ENCODE measurements at regions of chr1 and their contacts with region 1.

Region 1: DNA sequence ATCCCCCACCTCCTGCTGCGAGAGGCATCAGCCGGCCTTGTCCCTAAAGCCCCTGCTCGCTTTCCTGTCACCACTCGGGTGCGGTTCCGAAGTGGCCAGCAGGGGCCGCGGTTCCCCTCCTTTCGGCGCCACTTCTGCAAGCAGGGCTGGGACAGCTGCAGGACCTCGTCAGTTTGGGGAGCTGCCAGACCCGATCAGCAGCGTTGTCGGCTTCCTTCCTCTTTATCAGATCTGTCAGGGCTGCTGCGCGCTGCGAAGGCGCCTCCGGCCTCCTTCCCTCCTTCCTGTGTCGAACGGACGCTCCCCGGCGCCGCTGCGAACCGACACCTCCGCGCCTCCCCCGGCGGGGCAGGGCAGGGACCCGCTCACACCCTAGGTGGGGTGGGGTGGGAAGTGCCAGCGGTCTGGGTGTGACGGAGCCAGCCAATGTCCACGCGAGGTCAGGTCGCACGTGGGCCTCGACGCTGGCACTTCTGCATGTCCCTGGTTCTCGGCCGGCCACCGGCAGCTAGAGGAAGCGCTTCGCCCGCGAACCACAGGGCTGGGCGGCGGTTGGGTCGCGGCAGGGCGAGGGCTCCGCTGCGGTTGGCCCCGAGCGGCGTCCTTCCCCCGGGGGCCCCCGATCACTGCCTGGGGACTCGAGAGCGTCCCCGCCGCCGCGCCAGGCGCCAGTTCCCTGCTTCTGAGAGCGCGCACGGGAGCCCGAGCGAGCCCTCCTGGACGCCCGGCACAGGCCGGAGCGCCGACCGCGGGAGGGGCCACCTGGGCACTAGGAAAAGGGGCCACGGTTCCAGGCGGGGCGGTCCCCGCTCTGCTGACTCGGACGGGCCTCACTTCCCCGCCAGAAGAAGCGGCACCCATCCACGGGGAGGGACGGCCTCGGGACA is 81.8 kb downstream of the RUNX3 start:
- DNase-seq: peak; percentile 91
- H3K4me3 ChIP-seq: peak overlapping the region; percentile 32 to 42
- H3K27ac ChIP-seq: peak overlapping the region; percentile 38 to 55
- H3K4me1 ChIP-seq: peaks cover 2% of the 10 kb centered on the region
- H3K27me3 ChIP-seq: no peaks in the 10 kb centered on the region
- CTCF ChIP-seq: peak; percentile 84 to 96 (median 94)
- POLR2A ChIP-seq: no peak

Region 2: DNA sequence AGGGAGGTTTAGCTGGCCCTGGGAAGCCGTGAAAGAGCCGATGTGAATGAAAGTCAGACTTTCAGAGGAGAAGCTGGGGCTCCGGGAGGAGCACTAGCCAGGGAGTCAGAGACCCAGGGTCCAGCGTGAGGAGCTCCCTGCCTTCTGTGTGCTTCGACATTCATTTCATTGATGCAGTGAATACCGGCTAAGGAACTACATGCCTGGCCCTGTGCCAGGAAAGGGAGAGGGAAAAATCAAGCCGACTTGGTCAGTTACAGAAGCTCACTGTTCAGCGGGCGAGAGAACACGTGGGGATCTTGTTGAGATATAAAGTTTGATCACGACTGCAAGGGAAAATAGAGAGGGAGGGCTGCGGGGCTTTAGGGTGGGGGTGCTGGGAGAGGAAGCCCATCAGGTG is 158.5 kb after region 1 on chr1:
- intact Hi-C with region 1: no loop called
- DNase-seq: peak; percentile 12
- H3K4me3 ChIP-seq: no peak overlapping the region
- H3K27ac ChIP-seq: no peak overlapping the region
- H3K4me1 ChIP-seq: no peaks in the 10 kb centered on the region
- H3K27me3 ChIP-seq: no peaks in the 10 kb centered on the region
- CTCF ChIP-seq: no peak
- POLR2A ChIP-seq: no peak

Region 3: GRCh38 chr1:25103164-25103795 is 255.0 kb after region 1 on chr1:
- intact Hi-C with region 1: loop called (anchors 5 kb)
- DNase-seq: no peak
- H3K4me3 ChIP-seq: no peak overlapping the region
- H3K27ac ChIP-seq: no peak overlapping the region
- H3K4me1 ChIP-seq: no peaks in the 10 kb centered on the region
- H3K27me3 ChIP-seq: peaks cover 4% of the 10 kb centered on the region
- CTCF ChIP-seq: no peak
- POLR2A ChIP-seq: no peak

Region 4: DNA sequence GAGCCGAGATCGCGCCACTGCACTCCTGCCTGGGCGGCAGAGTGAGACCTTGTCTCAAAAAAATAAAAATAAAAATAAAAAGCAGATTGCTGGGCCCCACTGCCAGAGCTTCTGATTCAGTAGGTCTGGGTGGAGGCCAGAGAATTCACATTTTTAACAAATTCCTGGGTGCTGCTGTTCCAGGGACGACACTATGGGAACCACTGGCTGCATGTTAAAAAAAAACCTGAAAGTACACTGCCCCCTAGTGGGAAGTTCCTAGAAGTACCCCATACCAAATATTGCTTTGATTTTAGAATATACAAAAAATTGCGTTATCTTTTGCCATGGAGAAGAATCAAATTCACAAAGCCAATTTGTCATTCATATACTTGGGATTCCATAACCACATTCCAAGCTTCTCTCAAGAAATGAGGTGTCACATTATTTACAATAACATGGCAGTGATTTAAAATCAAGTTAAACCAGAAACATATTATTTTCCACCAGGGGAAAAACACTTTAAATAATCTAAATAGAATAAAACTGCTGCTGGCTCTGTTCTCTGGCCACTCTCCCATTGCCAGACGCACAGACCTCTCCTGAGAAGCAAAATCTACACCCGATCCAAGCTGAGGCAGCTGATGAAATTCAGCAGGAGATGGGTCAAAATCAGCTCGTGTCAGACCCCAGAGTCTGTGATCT is 356.7 kb after region 1 on chr1:
- intact Hi-C with region 1: loop called (anchors 2 kb)
- DNase-seq: no peak
- H3K4me3 ChIP-seq: no peak overlapping the region
- H3K27ac ChIP-seq: no peak overlapping the region
- H3K4me1 ChIP-seq: no peaks in the 10 kb centered on the region
- H3K27me3 ChIP-seq: no peaks in the 10 kb centered on the region
- CTCF ChIP-seq: peak; percentile 67 to 90 (median 68)
- POLR2A ChIP-seq: no peak